ENCODE measurements at regions of chr17 and their contacts with region 1.

Region 1: DNA sequence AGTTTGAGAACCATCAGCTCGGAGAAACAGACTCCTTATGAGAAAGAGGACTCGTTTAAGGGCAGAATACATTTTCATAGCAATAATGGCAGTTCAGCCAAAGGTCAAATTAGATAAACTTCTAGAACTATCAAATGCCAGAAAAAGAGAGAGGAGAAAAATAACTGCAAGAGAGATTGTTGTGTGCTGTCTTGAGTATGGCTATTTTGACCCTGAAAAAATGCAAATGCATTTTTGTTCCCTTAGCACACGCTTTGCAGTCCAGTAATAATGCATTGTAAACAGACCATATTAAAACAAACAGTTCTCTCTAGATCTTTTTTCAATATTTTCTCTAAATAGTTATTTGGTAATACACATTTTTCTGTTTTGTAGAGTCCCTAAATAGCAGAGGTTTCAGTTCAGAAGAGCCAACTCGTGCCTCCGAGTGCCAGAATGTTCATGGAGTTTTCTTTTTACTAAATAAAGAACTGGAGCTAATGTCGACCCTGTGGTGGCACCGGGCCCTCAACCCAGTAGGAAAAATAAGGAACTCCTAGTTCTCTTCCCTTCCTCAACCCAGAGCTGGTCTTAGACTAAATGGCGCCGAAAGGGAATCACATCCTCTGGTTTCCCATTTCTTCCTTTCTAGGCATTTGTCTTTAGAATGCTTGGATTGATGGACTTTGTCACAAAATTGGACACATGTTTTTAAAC is 298.0 kb downstream of the MAP2K4 start:
- DNase-seq: no peak
- ATAC-seq: no peak
- H3K4me3 ChIP-seq: no peak overlapping the region
- H3K27ac ChIP-seq: peak overlapping the region in 1 of 12 donors; percentile 34
- H3K4me1 ChIP-seq: no peaks in the 10 kb centered on the region
- H3K27me3 ChIP-seq: no peaks in the 10 kb centered on the region
- CTCF ChIP-seq: no peak
- POLR2A ChIP-seq: no peak

Region 2: GRCh38 chr17:12365805-12366204 is 47.1 kb after region 1 on chr17:
- intact Hi-C with region 1: loop called in 2 of 10 experiments (anchors 10 kb)
- DNase-seq: peak in 3 of 5 donors; percentile 29 to 65 (median 31)
- ATAC-seq: peak; percentile 51 to 98 (median 83)
- H3K4me3 ChIP-seq: no peak overlapping the region
- H3K27ac ChIP-seq: peak overlapping the region in 5 of 12 donors; percentile 30 to 84 (median 33)
- H3K4me1 ChIP-seq: peaks cover 0 to 13% (median 0%) of the 10 kb centered on the region in 12 donors
- H3K27me3 ChIP-seq: no peaks in the 10 kb centered on the region
- CTCF ChIP-seq: no peak
- POLR2A ChIP-seq: no peak

Region 3: DNA sequence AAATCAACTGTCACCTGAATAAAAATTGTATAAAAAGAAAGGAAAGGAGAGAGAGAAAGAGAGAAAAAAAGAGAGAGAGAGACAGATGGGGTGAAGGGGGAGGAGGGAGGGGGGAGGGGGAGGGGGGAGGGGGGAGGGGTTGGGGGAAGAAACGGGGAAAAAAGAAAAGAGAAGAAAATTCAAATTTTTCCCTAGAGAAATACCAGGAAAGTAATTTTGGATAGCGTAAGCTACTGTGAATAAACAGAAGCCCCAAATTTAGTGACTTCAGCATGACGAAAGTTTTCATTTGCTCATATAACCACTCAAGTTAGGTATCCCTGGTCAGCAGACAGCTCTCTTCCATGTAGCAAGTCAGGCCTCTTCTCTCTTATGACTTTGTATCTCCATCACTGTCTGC is 57.6 kb after region 1 on chr17:
- intact Hi-C with region 1: loop called in 1 of 10 experiments (anchors 10 kb)
- DNase-seq: no peak
- ATAC-seq: no peak
- H3K4me3 ChIP-seq: no peak overlapping the region
- H3K27ac ChIP-seq: no peak overlapping the region
- H3K4me1 ChIP-seq: no peaks in the 10 kb centered on the region
- H3K27me3 ChIP-seq: no peaks in the 10 kb centered on the region
- CTCF ChIP-seq: no peak
- POLR2A ChIP-seq: no peak